Activated naive CD4-positive, alpha-beta T cell treated with anti-CD3 and anti-CD28 coated beads for 36 hours (primary cell): ENCODE measurements at regions of chr3 and their contacts with region 1.

Region 1: DNA sequence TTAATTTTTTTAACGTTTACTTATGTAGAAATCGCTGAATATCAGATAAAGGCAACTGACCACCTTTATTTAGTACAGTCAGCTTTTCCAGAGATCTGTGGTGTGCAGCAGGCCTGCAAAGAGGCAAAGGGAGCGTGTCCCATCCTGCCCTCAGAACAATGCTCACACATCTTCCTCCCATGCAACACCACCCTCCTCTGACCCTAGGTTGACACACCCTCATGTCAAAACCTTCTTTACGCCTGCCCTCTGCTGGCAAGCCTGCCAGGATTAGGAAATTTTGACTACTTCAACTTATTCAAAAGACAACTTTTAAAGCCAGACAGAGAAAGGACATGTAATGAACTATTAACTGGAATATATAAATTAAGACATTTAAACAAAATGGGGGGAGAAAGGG is 513.7 kb downstream of the FOXP1 start:
- DNase-seq: peak; percentile 92
- H3K4me3 Mint-ChIP-seq: no peak overlapping the region
- H3K27ac Mint-ChIP-seq: peak overlapping the region; percentile 57
- H3K4me1 Mint-ChIP-seq: peaks cover 78% of the 10 kb centered on the region
- H3K27me3 Mint-ChIP-seq: no peaks in the 10 kb centered on the region

Region 2: GRCh38 chr3:70358978-70359580 is 710.7 kb before region 1 on chr3:
- CTCF ChIA-PET with region 1: no interaction called
- intact Hi-C with region 1: loop called (anchors 10 kb)
- DNase-seq: peak; percentile 32
- H3K4me3 Mint-ChIP-seq: no peak overlapping the region
- H3K27ac Mint-ChIP-seq: no peak overlapping the region
- H3K4me1 Mint-ChIP-seq: peaks cover 2% of the 10 kb centered on the region
- H3K27me3 Mint-ChIP-seq: peaks cover 10% of the 10 kb centered on the region

Region 3: GRCh38 chr3:70531063-70531657 is 538.6 kb before region 1 on chr3:
- CTCF ChIA-PET with region 1: no interaction called
- intact Hi-C with region 1: loop called (anchors 1 kb)
- DNase-seq: no peak
- H3K4me3 Mint-ChIP-seq: no peak overlapping the region
- H3K27ac Mint-ChIP-seq: no peak overlapping the region
- H3K4me1 Mint-ChIP-seq: no peaks in the 10 kb centered on the region
- H3K27me3 Mint-ChIP-seq: peaks cover 1% of the 10 kb centered on the region

Region 4: DNA sequence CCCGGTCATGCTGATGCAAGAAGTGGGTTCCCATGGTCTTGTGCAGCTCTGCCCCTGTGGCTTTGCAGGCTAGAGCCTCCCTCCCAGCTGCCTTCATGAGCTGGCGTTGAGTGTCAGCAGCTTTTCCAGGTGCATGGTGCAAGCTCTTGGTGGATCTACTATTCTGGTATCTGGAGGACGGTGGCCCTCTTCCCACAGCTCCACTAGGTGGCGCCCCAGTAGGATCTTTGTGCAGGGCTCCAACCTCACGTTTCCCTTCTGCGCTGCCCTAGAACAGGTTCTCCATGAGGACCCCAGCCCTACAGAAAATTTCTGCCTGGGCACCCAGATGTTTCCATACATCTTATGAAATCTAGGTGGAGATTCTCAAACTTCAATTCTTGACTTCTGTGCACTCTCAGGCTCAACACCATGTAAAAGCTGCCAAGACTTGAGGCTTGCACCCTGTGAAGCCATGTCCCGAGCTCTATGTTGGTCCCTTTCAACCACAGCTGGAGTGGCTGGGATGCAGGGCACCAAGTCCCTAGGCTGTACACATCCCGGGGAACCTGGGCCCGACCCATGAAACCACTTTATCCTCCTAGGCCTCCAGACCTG is 519.0 kb before region 1 on chr3:
- CTCF ChIA-PET with region 1: interaction called, 6 read pairs
- intact Hi-C with region 1: loop called (anchors 1 kb)
- DNase-seq: peak; percentile 88
- H3K4me3 Mint-ChIP-seq: no peak overlapping the region
- H3K27ac Mint-ChIP-seq: no peak overlapping the region
- H3K4me1 Mint-ChIP-seq: no peaks in the 10 kb centered on the region
- H3K27me3 Mint-ChIP-seq: no peaks in the 10 kb centered on the region

Region 5: GRCh38 chr3:70716832-70717231 is 353.0 kb before region 1 on chr3:
- CTCF ChIA-PET with region 1: no interaction called
- intact Hi-C with region 1: loop called (anchors 1 kb)
- DNase-seq: peak; percentile 24
- H3K4me3 Mint-ChIP-seq: no peak overlapping the region
- H3K27ac Mint-ChIP-seq: no peak overlapping the region
- H3K4me1 Mint-ChIP-seq: peaks cover 2% of the 10 kb centered on the region
- H3K27me3 Mint-ChIP-seq: peaks cover 4% of the 10 kb centered on the region

Region 6: DNA sequence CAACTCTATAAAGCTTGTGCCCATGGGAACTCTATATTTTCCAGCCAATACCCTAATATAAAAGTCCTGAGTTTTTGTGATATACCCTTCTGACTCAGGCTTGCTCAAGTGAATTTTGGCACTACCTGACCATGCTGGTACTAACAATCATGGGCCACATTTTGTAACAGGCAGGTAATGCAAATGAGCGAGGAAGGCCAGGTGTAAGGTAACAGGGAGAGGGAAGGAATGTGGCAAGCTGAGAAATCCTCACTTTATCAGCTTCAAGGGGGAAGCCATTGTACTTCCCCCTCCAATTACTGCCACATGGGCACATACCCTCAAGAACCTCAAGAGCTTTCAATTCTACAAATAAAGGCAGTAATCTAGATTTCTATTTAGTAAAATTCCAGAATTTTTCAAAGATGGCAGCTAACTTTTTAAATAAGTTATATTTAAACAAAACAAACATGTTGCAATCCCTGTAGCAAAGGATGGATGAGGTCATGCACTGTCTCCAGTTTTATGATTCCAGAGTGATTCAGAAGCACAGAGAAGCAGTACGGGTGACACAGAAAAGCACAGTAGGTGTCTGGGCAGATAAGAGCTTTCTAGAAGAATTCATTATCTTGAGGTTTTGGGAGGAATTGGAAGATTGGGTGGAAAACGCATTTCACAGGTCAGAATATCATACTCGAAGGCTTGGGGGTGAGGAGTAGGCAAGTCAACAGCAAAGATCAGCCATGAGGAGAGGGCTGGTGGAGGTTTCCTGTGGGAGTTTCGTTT is 426.1 kb after region 1 on chr3:
- CTCF ChIA-PET with region 1: no interaction called
- intact Hi-C with region 1: loop called (anchors 5 kb)
- DNase-seq: peak; percentile 43
- H3K4me3 Mint-ChIP-seq: peak overlapping the region; percentile 49
- H3K27ac Mint-ChIP-seq: peak overlapping the region; percentile 73
- H3K4me1 Mint-ChIP-seq: peaks cover 83% of the 10 kb centered on the region
- H3K27me3 Mint-ChIP-seq: no peaks in the 10 kb centered on the region